OCI-LY7 (cell line): ENCODE measurements at regions of chrX and their contacts with region 1.

Region 1: DNA sequence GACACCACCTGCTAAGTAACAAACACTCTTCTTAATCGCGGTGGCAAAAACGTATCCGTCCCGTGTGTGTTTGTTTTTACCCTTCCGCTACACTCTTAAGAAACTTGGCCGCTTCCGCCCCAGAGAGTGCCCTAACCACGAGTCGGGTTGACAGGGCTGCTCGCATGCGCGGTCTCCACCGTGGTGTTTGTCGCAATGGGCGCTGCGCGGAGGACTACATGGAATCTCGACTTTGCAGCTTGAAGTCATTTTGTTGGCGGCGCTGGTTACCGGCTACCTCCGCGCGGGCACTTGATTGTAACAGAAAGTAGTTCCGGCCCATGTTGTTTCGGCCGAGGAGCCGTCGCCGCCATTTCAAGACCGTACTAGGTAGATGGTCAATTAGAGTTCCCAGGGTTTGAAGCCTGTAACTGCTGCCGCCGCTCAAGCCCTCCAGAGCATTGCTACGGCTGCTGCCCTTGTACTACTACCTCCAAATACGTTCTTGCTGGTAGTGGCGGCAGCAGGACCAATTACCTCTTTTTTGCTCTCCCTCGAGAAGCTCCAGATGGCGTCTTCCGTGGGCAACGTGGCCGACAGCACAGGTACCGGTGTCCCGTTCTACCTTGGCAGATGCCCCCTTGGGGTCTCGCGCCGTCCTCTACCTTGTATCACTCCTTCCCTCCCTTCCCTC is at the start of gene OGT:
- DNase-seq: peak; percentile 98
- H3K4me3 ChIP-seq: peak within 1 kb of the TSS; percentile 78
- H3K27ac ChIP-seq: peak within 1 kb of the TSS; percentile 80
- H3K4me1 ChIP-seq: peaks cover 23% of the 10 kb centered on the region
- CTCF ChIP-seq: no peak
- total RNA-seq, gene OGT: 160 and 185 TPM in 2 replicates

Region 2: DNA sequence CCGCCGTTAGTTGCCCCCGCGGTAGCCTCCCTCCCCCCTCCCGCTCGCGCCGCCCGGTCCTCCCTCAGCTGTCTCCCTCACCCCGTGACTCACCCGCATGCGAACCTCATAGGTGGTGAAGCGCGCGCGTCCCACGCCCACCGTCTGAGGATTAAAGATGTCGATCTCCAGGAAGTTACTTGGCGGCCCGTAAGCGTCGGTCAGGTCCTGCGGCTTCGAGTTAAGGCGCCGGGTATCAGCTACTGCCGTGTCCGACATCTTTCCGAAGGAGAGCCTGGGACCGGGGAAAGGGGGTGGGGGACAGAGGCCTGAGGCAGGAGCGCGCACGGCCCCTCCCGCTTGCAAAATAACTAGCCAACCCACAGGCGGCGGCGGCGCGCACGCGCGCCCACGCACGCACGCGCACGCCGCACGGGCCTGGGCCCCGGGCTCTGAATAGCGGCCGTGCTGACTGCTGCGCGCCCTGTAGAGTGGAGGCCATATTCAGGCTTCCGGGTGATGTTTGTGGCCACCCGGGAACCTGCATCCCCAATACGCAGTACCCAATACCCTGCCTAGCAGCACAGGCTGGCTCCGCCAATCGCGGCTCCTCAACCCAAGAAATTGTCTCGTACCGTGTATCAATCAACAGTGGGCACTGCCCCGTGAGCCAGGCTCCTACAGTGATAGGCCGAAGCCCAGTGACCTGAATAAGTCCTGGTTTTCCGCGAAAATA is 464.7 kb before region 1 on chrX and contains the start of gene SNX12:
- CTCF ChIA-PET with region 1: no interaction called
- POLR2A ChIA-PET with region 1: no interaction called
- intact Hi-C with region 1: loop called (anchors 2 kb)
- DNase-seq: peak; percentile 93
- H3K4me3 ChIP-seq: peak within 1 kb of the TSS; percentile 96
- H3K27ac ChIP-seq: peak within 1 kb of the TSS; percentile 69
- H3K4me1 ChIP-seq: peaks cover 7% of the 10 kb centered on the region
- CTCF ChIP-seq: no peak
- total RNA-seq, gene SNX12: 21.3 and 24.8 TPM in 2 replicates

Region 3: DNA sequence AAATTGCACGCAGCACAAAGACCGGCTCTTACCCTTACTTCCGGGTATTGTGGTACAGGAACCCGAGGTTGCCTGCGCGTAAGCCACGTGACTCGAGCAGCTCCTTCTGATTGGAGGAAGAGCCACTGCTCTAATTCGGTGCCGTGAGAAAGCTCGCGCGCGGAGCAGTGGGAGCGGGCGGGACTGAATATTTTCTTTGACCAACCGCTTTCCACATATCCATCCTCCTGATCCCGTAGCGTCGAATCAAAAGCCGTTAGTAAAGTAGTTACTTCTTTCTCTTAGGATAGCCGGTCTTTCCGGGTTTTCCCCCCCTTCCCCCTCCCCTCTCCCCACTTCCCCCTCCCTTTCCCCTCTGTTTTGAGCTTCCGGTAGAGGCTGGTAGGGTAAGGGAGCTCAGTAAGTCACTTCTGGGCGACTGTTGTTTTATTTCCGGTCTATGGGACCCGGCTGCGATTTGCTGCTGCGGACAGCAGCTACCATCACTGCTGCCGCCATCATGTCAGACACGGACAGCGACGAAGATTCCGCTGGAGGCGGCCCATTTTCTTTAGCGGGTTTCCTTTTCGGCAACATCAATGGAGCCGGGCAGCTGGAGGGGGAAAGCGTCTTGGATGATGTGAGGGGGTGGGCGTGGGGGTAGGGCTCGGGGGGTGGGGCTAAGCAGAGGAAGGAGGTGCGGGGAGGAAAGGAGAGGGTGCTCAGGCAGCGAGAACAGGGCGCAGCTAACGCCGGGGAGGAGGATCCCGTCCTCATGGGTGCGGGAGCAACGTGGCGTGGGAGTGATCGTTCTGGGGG is 166.8 kb before region 1 on chrX and contains the start of gene TAF1:
- CTCF ChIA-PET with region 1: interaction called, 3 read pairs
- POLR2A ChIA-PET with region 1: interaction called, 5 read pairs
- intact Hi-C with region 1: loop called (anchors 2 kb)
- DNase-seq: peak; percentile 96
- H3K4me3 ChIP-seq: peak within 1 kb of the TSS; percentile 95
- H3K27ac ChIP-seq: peak within 1 kb of the TSS; percentile 87
- H3K4me1 ChIP-seq: peaks cover 19% of the 10 kb centered on the region
- CTCF ChIP-seq: no peak
- total RNA-seq, gene TAF1: 30.2 and 50.8 TPM in 2 replicates

Region 4: DNA sequence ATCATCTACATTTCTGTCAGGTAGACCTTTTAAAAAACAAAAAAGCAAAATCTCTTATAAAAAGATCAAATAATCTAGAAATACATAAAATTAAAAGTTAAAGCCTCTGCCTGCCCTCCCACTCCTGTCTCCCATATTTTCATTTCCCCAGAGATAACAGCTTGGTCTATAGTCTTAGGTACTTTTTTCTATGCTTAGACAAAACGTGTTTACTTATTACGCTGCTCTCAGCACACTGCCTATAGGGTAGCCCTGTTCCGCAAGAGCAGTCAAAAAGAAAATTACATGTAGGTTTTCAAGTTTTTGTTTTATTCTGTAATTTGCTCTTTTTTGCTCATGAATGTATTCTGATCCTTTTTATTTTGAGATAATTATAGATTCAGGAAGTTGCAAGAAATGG is 93.5 kb before region 1 on chrX:
- CTCF ChIA-PET with region 1: no interaction called
- POLR2A ChIA-PET with region 1: no interaction called
- intact Hi-C with region 1: no loop called
- DNase-seq: no peak
- H3K4me3 ChIP-seq: no peak overlapping the region
- H3K27ac ChIP-seq: no peak overlapping the region
- H3K4me1 ChIP-seq: no peaks in the 10 kb centered on the region
- CTCF ChIP-seq: no peak